ENCODE measurements at regions of chr6 and their contacts with region 1.

Region 1: GRCh38 chr6:28880894-28881780 is 42.6 kb downstream of the TRIM27 start:
- DNase-seq: peak; percentile 46 to 69 (median 65)
- ATAC-seq: peak in 3 of 4 donors; percentile 59 to 78 (median 76)
- H3K4me3 ChIP-seq: peak overlapping the region; percentile 18 to 68 (median 59)
- H3K27ac ChIP-seq: peak overlapping the region in 2 of 12 donors; percentile 24 to 55
- H3K4me1 ChIP-seq: peaks cover 0 to 5% (median 0%) of the 10 kb centered on the region in 12 donors
- H3K27me3 ChIP-seq: peaks cover 0 to 24% (median 7%) of the 10 kb centered on the region in 9 donors
- CTCF ChIP-seq: no peak
- POLR2A ChIP-seq: no peak

Region 2: DNA sequence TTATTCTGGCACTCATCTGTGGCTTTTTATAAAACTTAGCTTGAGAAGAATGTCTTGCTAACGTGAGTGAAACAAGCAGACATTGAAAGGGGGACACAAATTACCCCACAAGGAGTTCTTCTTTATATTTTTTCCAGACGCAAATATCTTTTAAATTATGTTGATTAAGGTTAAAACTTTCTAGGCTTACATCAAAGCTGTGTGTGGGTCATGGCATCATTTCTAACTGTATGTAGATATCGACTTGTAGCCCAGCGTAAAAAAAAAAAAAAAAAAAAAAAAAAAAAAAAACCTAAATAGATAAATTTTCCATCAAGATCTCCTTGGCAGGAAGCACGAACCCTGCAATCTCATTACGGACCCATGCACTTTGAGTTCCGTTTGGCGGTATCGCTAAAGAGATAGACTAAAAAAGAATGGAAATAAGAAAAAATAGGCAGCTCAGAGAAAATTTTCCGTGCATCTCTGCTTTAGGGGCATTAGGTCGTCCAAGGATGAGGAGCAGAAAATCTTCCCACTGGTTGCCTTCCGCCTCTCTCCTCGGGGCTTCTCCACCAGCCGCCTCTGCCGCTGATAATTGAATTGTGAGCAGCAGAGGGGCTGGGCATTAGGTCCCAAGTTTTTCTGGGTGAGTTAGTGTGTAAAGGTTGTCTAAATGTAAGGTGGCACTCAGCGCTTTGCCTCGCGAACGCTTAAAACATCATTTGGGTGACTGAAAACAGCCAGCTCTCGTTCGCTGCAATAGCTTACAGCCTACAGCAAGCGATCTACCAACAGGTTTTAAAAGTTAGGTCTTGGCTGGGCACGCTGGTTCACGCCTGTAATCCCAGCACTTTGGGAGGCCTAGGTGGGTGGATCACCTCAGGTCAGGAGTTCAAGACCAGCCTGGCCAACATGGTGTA is 151.4 kb before region 1 on chr6:
- intact Hi-C with region 1: no loop called
- DNase-seq: no peak
- ATAC-seq: no peak
- H3K4me3 ChIP-seq: peak overlapping the region in 9 of 12 donors; percentile 34 to 61 (median 55)
- H3K27ac ChIP-seq: no peak overlapping the region
- H3K4me1 ChIP-seq: peaks cover 0 to 5% (median 0%) of the 10 kb centered on the region in 12 donors
- H3K27me3 ChIP-seq: peaks cover 0 to 86% (median 32%) of the 10 kb centered on the region in 9 donors
- CTCF ChIP-seq: no peak
- POLR2A ChIP-seq: no peak

Region 3: DNA sequence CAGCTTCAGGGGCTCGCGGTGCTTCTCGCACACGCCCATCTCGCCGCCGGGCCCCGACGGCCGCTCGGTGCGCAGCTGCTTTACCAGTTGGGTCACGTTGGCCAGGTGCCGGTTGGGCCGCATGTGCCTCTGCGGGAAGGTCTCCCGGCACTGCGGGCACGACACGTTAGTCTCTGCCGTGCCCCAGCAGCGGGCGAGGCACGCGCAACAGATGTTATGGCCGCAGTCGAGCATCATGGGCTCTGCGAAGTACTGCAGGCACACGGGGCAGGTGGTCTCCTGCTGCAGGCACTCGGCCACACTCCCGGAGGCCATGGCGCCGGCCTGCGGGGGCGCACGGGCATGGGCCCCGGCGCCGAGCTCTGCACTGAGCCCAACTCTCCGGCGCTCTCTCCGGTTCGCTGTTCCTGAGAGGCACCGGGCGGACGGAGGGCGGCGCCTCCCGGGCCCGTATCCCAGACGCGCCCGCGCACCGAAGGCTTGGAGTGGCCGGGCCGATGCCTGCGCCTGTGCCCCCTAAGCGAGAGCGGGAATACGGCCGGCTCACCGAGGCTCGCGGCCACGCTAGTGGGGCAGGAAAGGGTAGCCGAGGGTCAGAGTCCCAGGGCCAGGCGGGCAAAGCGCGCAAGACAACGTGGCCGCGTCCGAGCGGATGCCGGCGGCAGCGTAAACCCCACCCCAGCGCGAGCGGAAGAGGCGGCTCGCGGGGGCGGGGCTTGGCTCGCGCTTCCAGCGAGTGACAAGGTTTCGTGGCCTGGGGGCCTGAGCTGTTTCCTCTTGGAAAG is 42.4 kb after region 1 on chr6 and contains the start of gene TRIM27:
- intact Hi-C with region 1: loop called in 1 of 10 experiments (anchors 5 kb)
- DNase-seq: peak; percentile 93 to 96 (median 95)
- ATAC-seq: peak; percentile 94 to 98 (median 98)
- H3K4me3 ChIP-seq: peak within 1 kb of the TSS; percentile 85 to 100 (median 90)
- H3K27ac ChIP-seq: peak within 1 kb of the TSS; percentile 67 to 98 (median 96)
- H3K4me1 ChIP-seq: peaks cover 0 to 46% (median 19%) of the 10 kb centered on the region in 12 donors
- H3K27me3 ChIP-seq: no peaks in the 10 kb centered on the region
- CTCF ChIP-seq: peak in 2 of 12 donors; percentile 14 to 20
- POLR2A ChIP-seq: peak in 1 of 2 donors; percentile 91
- total RNA-seq, gene TRIM27: 14.7 to 37.7 (median 19.8) TPM

Measured in heart left ventricle (tissue), 16 donors.